Right lobe of liver (tissue), 6 donors: ENCODE measurements at regions of chr10 and their contacts with region 1.

Region 1: DNA sequence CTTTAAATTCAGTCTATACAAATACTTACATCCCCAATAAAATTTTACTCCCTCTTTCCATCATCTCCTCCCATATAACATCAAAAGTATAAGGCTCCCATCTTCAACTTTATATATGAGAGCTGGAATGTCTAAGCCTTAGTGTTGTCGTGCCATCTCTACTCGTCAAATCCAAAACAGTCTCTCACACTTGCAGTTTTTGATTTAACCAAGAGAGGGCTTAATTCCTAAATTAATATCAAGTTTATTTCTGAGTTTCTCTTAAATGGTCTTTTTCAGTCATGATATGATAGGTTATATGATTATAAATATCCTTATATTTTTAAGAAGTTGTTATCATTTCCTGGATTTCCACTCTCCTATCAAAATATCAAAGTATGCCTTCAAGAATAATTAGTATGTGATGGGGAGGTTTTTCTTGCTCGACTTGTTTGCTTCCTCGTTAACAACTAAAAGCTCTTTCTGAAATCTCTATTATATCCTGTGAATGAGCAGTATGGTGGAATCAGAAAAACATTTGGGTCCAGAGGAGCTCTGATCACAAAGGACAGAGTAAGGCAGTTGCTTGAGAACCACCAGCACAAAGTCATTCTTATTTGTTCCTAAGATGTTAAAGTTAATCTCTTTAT is 12.5 kb upstream of the LIPK start:
- DNase-seq: no peak
- ATAC-seq: no peak
- H3K4me3 ChIP-seq: no peak overlapping the region
- H3K27ac ChIP-seq: no peak overlapping the region
- H3K4me1 ChIP-seq: no peaks in the 10 kb centered on the region
- H3K27me3 ChIP-seq: no peaks in the 10 kb centered on the region
- CTCF ChIP-seq: peak in 3 of 4 donors; percentile 29 to 44 (median 36)
- POLR2A ChIP-seq: no peak

Region 2: GRCh38 chr10:88343761-88344484 is 349.6 kb before region 1 on chr10:
- intact Hi-C with region 1: no loop called
- DNase-seq: no peak
- ATAC-seq: peak in 2 of 4 donors; percentile 26 to 45
- H3K4me3 ChIP-seq: no peak overlapping the region
- H3K27ac ChIP-seq: no peak overlapping the region
- H3K4me1 ChIP-seq: peaks cover 0 to 15% (median 4%) of the 10 kb centered on the region in 4 donors
- H3K27me3 ChIP-seq: no peaks in the 10 kb centered on the region
- CTCF ChIP-seq: no peak
- POLR2A ChIP-seq: no peak

Region 3: DNA sequence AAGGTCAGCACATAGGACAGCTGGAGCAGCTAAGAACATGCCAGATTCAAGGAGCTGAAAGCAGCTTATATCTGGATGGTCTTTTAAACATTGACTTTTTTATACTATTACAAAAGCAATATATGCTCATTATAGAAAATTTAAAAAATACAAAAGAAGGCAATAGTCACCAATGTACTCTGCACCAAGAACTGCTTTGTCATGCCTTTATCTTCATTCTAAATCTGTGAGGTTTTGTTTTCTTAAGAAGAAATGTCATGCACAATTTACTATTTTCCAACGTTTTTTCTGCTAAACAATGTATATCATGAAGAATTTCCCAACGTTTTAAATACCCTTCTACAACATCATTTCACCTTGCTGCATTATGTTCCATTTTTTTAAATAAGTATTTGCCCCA is 111.9 kb after region 1 on chr10:
- intact Hi-C with region 1: loop called (anchors 5 to 10 kb)
- DNase-seq: no peak
- ATAC-seq: no peak
- H3K4me3 ChIP-seq: no peak overlapping the region
- H3K27ac ChIP-seq: no peak overlapping the region
- H3K4me1 ChIP-seq: no peaks in the 10 kb centered on the region
- H3K27me3 ChIP-seq: no peaks in the 10 kb centered on the region
- CTCF ChIP-seq: no peak
- POLR2A ChIP-seq: no peak